Adrenal gland (tissue), 19 donors: ENCODE measurements at regions of chr2 and their contacts with region 1.

Region 1: GRCh38 chr2:174771631-174772471 is 7.6 kb upstream of the CHRNA1 start:
- DNase-seq: peak; percentile 78 to 94 (median 85)
- H3K4me3 ChIP-seq: peak overlapping the region in 1 of 4 donors; percentile 23
- H3K27ac ChIP-seq: peak overlapping the region in 1 of 5 donors; percentile 1
- H3K4me1 ChIP-seq: peaks cover 0 to 5% of the 10 kb centered on the region in 2 donors
- H3K27me3 ChIP-seq: no peaks in the 10 kb centered on the region
- CTCF ChIP-seq: peak; percentile 70 to 90 (median 87)
- POLR2A ChIP-seq: no peak

Region 2: GRCh38 chr2:174985630-174986029 is 213.8 kb after region 1 on chr2:
- intact Hi-C with region 1: loop called (anchors 5 kb)
- DNase-seq: no peak
- H3K4me3 ChIP-seq: no peak overlapping the region
- H3K27ac ChIP-seq: no peak overlapping the region
- H3K4me1 ChIP-seq: peaks cover 0 to 4% of the 10 kb centered on the region in 2 donors
- H3K27me3 ChIP-seq: no peaks in the 10 kb centered on the region
- CTCF ChIP-seq: peak; percentile 24 to 72 (median 58)
- POLR2A ChIP-seq: no peak

Region 3: GRCh38 chr2:174992886-174993285 is 221.0 kb after region 1 on chr2:
- intact Hi-C with region 1: loop called (anchors 5 kb)
- DNase-seq: no peak
- H3K4me3 ChIP-seq: no peak overlapping the region
- H3K27ac ChIP-seq: no peak overlapping the region
- H3K4me1 ChIP-seq: peaks cover 0 to 7% of the 10 kb centered on the region in 2 donors
- H3K27me3 ChIP-seq: no peaks in the 10 kb centered on the region
- CTCF ChIP-seq: no peak
- POLR2A ChIP-seq: no peak